Heart right ventricle (tissue), 16 donors: ENCODE measurements at regions of chr3 and their contacts with region 1.

Region 1: GRCh38 chr3:112990672-112991602 is at the start of gene GTPBP8:
- DNase-seq: peak; percentile 91 to 92
- ATAC-seq: peak; percentile 98 to 99 (median 99)
- H3K4me3 ChIP-seq: peak within 1 kb of the TSS; percentile 64 to 92 (median 78)
- H3K27ac ChIP-seq: peak within 1 kb of the TSS; percentile 88 to 98 (median 96)
- H3K4me1 ChIP-seq: peaks cover 2 to 28% (median 15%) of the 10 kb centered on the region in 9 donors
- H3K27me3 ChIP-seq: no peaks in the 10 kb centered on the region
- CTCF ChIP-seq: peak in 3 of 9 donors; percentile 21 to 36 (median 34)
- total RNA-seq, gene GTPBP8: 19.7 to 31.3 (median 26.3) TPM

Region 2: DNA sequence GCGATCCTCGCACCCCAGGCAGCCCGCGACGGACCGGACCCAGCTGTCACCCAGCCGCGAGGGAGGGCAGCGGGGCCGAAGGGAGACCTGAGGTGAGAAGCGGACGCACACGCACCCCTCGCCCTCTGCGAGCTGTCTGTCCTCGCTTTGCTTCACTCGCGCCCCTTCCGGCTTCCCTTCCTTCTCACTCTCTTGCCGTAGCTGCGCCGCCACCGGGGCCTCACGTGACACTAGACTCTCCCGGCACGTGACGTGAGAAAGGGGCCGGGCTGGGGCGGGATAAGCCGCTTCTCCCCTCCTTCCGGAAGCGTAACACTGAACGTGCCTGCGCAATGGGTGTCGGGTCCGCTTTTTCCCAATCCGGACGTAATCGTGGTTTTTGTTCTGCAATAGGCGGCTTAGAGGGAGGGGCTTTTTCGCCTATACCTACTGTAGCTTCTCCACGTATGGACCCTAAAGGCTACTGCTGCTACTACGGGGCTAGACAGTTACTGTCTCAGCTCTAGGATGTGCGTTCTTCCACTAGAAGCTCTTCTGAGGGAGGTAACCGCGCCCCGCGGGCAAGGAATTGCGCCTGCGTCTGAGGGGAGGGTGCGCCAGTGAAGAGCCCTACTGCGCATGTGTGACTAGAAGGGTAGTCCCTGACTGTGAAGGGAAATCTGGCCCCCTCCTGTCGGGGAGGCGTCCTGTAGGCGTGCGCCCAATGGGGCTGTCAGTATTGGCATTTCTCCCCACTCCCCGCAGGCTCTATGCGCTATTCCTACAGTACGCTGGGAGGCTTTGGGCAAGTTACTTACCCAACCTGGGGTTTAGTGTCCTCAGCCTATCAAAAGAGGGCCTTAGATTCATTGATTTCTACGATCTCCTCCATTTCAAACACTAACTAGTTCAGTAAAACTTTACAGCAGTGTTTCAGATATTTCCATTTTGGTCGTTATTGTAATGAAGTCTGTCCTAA is 428.9 kb before region 1 on chr3 and contains the starts of genes ATG3 and SLC35A5:
- intact Hi-C with region 1: loop called in 1 of 10 experiments (anchors 5 kb)
- DNase-seq: peak; percentile 99
- ATAC-seq: peak; percentile 96 to 99 (median 97)
- H3K4me3 ChIP-seq: peak within 1 kb of the TSS; percentile 71 to 99 (median 85)
- H3K27ac ChIP-seq: peak within 1 kb of the TSS; percentile 86 to 99 (median 92)
- H3K4me1 ChIP-seq: peaks cover 2 to 47% (median 40%) of the 10 kb centered on the region in 9 donors
- H3K27me3 ChIP-seq: no peaks in the 10 kb centered on the region
- CTCF ChIP-seq: peak in 3 of 9 donors; percentile 3 to 21 (median 5)
- total RNA-seq, gene ATG3: 38.2 to 52.2 (median 42.8) TPM
- total RNA-seq, gene SLC35A5: 12.0 to 25.7 (median 15.1) TPM

Region 3: GRCh38 chr3:112582244-112582874 is 408.6 kb before region 1 on chr3:
- intact Hi-C with region 1: loop called in 2 of 10 experiments (anchors 5 to 10 kb)
- DNase-seq: peak in 1 of 2 donors; percentile 19
- ATAC-seq: no peak
- H3K4me3 ChIP-seq: no peak overlapping the region
- H3K27ac ChIP-seq: no peak overlapping the region
- H3K4me1 ChIP-seq: peaks cover 0 to 16% (median 0%) of the 10 kb centered on the region in 9 donors
- H3K27me3 ChIP-seq: no peaks in the 10 kb centered on the region
- CTCF ChIP-seq: peak; percentile 25 to 76 (median 66)

Region 4: DNA sequence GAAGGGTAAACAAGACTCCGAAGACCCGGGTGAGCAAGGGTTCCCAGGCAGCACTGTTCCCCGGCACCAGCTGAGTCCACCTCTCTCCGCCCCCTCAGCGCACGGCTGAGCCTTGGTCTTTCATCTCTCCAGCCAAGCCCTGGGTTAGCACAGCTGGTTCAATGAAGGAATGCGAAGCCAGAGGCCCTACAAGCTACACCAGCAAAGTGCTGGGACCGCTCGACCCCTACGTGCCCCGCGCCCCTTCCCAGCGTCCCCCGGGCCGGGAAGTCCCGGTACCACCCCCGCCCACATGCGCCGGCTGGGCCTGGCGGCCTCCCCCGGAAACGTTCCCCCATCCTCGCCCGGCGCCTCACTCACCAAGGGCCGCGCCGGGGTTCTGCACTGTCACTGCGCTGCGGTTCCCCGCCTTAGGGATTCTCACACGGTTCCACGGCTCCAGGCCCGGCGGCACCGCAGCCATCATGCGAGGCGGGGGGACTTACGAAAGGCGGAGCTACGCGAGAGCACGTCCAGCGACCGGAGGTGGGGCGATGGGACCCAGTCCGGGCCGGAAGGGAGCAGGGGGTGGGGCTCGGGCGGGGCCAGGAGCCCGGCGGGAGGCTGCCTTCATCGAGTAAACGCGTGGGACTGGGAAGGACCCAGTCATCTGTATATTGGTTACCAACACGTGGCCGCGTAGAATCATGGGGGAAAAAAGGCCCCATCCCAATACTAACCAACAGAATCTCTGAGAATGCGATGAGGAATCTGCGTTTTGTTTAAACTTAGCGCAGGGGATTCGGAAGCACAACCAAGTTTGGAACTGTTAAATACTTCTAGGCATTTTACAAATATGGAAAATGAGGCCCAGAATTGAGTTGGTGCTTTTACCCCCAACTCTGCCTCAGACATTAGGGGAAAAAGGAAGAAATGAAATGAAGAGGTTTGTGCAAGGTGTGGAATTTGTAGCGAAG is 28.5 kb after region 1 on chr3:
- intact Hi-C with region 1: loop called in 1 of 10 experiments (anchors 2 kb)
- DNase-seq: peak; percentile 90 to 91
- ATAC-seq: peak; percentile 96 to 99 (median 98)
- H3K4me3 ChIP-seq: peak overlapping the region; percentile 50 to 88 (median 76)
- H3K27ac ChIP-seq: peak overlapping the region; percentile 69 to 99 (median 94)
- H3K4me1 ChIP-seq: peaks cover 4 to 42% (median 23%) of the 10 kb centered on the region in 9 donors
- H3K27me3 ChIP-seq: no peaks in the 10 kb centered on the region
- CTCF ChIP-seq: no peak

Region 5: GRCh38 chr3:114686621-114687020 is 1695.7 kb after region 1 on chr3:
- intact Hi-C with region 1: no loop called
- DNase-seq: peak in 1 of 2 donors; percentile 20
- ATAC-seq: peak in 7 of 8 donors; percentile 60 to 82 (median 70)
- H3K4me3 ChIP-seq: no peak overlapping the region
- H3K27ac ChIP-seq: peak overlapping the region; percentile 2 to 80 (median 54)
- H3K4me1 ChIP-seq: peaks cover 0 to 38% (median 16%) of the 10 kb centered on the region in 9 donors
- H3K27me3 ChIP-seq: no peaks in the 10 kb centered on the region
- CTCF ChIP-seq: no peak